Activated CD4-positive, alpha-beta memory T cell treated with anti-CD3 and anti-CD28 coated beads for 36 hours (primary cell): ENCODE measurements at regions of chr13 and their contacts with region 1.

Region 1: GRCh38 chr13:52194184-52194868 is 34.9 kb upstream of the NEK3 start:
- DNase-seq: peak; percentile 93
- H3K4me3 Mint-ChIP-seq: peak overlapping the region; percentile 97
- H3K27ac Mint-ChIP-seq: peak overlapping the region; percentile 91
- H3K4me1 Mint-ChIP-seq: peaks cover 22% of the 10 kb centered on the region
- H3K27me3 Mint-ChIP-seq: no peaks in the 10 kb centered on the region

Region 2: DNA sequence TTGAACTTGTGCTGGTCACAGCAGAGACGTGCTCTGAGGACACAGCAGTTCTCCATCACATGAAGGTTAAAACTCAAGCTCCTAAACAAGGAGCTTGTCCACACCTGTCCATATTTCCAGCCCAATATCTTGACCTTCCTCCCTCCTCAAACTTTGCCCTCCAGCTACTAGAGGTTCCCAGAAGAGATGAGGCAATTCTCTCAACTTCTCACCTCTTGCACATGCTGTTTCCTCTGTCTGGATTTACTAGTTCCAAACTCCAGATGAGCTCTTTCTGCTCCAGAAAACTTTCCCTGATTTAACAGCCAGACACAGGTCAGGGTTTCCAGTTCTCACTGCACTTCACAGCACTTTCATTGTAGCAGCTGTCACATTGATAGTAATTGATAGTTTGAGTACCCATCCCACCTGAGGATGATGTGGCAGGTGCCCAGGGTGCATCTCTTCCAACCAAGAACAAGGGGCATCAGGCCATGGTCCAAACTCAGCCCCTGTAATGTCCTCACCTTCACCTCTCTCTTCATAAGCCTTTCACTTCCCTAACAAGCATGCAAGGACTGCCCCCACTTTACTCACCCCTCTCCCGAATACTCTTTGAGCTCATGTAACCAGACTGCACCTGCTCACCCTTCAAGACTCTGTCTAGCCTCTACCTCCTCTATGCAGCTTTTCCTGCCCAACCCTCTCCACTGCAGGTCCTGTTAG is 613.1 kb before region 1 on chr13:
- CTCF ChIA-PET with region 1: no interaction called
- POLR2A ChIA-PET with region 1: no interaction called
- intact Hi-C with region 1: no loop called
- DNase-seq: no peak
- H3K4me3 Mint-ChIP-seq: no peak overlapping the region
- H3K27ac Mint-ChIP-seq: no peak overlapping the region
- H3K4me1 Mint-ChIP-seq: peaks cover 12% of the 10 kb centered on the region
- H3K27me3 Mint-ChIP-seq: peaks cover 3% of the 10 kb centered on the region

Region 3: DNA sequence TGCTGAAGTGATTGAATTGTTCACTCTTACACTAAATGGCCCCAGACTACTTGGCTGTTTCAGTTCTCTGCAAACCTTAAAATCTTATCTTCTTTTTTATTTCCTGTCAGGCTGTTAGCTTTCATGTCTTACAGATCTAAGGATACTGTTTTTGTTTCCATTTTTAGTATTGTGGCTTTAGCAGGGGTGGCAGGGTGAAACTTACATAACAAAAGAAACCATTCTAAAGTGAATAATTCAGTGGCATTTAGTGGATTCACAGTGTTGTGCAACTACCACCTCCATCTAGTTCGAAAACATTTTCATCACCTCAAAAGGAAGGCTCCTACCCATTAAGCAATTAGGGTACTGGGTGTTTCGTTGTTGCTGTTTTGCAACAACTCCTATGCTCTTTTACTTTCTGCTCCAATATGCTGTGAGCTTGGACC is 369.1 kb before region 1 on chr13:
- CTCF ChIA-PET with region 1: no interaction called
- POLR2A ChIA-PET with region 1: no interaction called
- intact Hi-C with region 1: loop called (anchors 10 kb)
- DNase-seq: no peak
- H3K4me3 Mint-ChIP-seq: peak overlapping the region; percentile 52
- H3K27ac Mint-ChIP-seq: peak overlapping the region; percentile 84
- H3K4me1 Mint-ChIP-seq: peaks cover 81% of the 10 kb centered on the region
- H3K27me3 Mint-ChIP-seq: no peaks in the 10 kb centered on the region

Region 4: DNA sequence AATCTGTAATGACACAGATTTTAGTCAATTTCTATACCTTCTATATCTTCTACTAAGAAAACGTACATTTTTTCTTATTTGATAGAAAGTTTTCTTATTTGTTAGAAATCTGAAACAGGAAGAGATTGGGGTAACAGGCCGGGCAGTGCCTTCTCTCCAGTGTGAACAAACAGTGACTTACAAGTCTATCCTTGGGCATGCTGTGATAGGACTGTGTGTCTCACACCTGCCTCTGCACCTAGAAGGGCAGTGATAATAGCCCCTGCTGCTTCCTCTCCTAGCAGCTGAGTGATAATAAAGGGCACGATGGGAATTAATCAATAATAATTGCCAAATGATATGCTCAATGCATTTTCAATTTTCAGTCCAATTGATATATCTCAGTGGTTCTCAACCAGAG is 350.8 kb before region 1 on chr13:
- CTCF ChIA-PET with region 1: no interaction called
- POLR2A ChIA-PET with region 1: no interaction called
- intact Hi-C with region 1: no loop called
- DNase-seq: no peak
- H3K4me3 Mint-ChIP-seq: no peak overlapping the region
- H3K27ac Mint-ChIP-seq: no peak overlapping the region
- H3K4me1 Mint-ChIP-seq: peaks cover 16% of the 10 kb centered on the region
- H3K27me3 Mint-ChIP-seq: peaks cover 2% of the 10 kb centered on the region

Region 5: GRCh38 chr13:52097197-52097596 is 97.1 kb before region 1 on chr13:
- CTCF ChIA-PET with region 1: no interaction called
- POLR2A ChIA-PET with region 1: no interaction called
- intact Hi-C with region 1: no loop called
- DNase-seq: no peak
- H3K4me3 Mint-ChIP-seq: no peak overlapping the region
- H3K27ac Mint-ChIP-seq: no peak overlapping the region
- H3K4me1 Mint-ChIP-seq: no peaks in the 10 kb centered on the region
- H3K27me3 Mint-ChIP-seq: no peaks in the 10 kb centered on the region

Region 6: GRCh38 chr13:52141297-52141696 is 53.0 kb before region 1 on chr13:
- CTCF ChIA-PET with region 1: no interaction called
- POLR2A ChIA-PET with region 1: no interaction called
- intact Hi-C with region 1: no loop called
- DNase-seq: no peak
- H3K4me3 Mint-ChIP-seq: no peak overlapping the region
- H3K27ac Mint-ChIP-seq: no peak overlapping the region
- H3K4me1 Mint-ChIP-seq: no peaks in the 10 kb centered on the region
- H3K27me3 Mint-ChIP-seq: no peaks in the 10 kb centered on the region

Region 7: DNA sequence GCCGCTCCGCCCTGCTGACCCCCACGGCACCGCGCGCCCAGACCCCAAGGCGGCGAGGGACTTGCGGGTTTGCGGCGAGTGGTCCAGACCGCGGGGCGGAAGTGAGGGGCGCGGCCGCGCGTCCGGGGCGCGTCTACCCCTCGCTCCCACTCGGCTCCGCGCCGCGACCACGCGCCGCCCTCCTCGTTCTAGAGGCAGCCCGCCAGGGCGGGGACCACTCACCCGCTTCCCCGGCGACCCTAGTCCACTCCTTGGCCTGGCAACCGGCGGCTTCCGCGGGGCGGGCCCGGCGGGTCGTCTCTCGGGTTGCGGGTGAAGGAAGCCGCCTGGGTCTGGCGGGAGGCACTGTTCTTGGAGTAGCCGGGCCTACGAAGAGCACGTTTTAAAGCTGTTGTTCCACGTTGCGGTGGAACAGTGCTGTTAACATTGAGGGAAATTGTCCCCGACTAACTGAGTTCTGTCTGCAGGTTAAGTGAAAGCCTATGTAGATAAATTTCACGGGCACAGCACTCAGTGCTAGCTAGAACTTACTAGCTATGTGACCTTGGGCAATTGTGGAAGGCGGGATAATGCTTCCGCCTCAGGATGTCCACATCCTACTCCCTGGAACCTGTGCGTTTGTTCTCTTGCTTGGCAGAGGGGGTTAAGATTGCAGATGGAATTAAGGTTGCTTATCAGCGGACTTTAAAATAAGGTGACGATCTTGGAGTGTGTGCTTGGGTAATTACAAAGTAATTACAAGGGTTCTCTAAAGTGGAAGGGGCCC is 34.8 kb before region 1 on chr13 and contains the start of gene NEK3:
- CTCF ChIA-PET with region 1: no interaction called
- POLR2A ChIA-PET with region 1: no interaction called
- intact Hi-C with region 1: loop called (anchors 1 kb)
- DNase-seq: peak; percentile 72
- H3K4me3 Mint-ChIP-seq: peak within 1 kb of the TSS; percentile 83
- H3K27ac Mint-ChIP-seq: peak within 1 kb of the TSS; percentile 68
- H3K4me1 Mint-ChIP-seq: peaks cover 26% of the 10 kb centered on the region
- H3K27me3 Mint-ChIP-seq: no peaks in the 10 kb centered on the region
- total RNA-seq, gene NEK3: 11.0 to 12.9 TPM